Sigmoid colon (tissue), 7 donors: ENCODE measurements at regions of chr5 and their contacts with region 1.

Region 1: GRCh38 chr5:67059744-67060490 is 136.7 kb downstream of the CD180 start:
- DNase-seq: no peak
- H3K4me3 ChIP-seq: no peak overlapping the region
- H3K27ac ChIP-seq: no peak overlapping the region
- H3K4me1 ChIP-seq: peaks cover 0 to 6% (median 0%) of the 10 kb centered on the region in 4 donors
- H3K27me3 ChIP-seq: no peaks in the 10 kb centered on the region
- CTCF ChIP-seq: no peak
- EP300 ChIP-seq: no peak
- POLR2A ChIP-seq: no peak

Region 2: GRCh38 chr5:67073045-67073680 is 13.2 kb after region 1 on chr5:
- intact Hi-C with region 1: loop called (anchors 2 kb)
- DNase-seq: no peak
- H3K4me3 ChIP-seq: no peak overlapping the region
- H3K27ac ChIP-seq: no peak overlapping the region
- H3K4me1 ChIP-seq: no peaks in the 10 kb centered on the region
- H3K27me3 ChIP-seq: no peaks in the 10 kb centered on the region
- CTCF ChIP-seq: no peak
- EP300 ChIP-seq: no peak
- POLR2A ChIP-seq: no peak

Region 3: GRCh38 chr5:67620424-67621397 is 560.8 kb after region 1 on chr5:
- intact Hi-C with region 1: no loop called
- DNase-seq: no peak
- H3K4me3 ChIP-seq: no peak overlapping the region
- H3K27ac ChIP-seq: no peak overlapping the region
- H3K4me1 ChIP-seq: peaks cover 0 to 6% (median 0%) of the 10 kb centered on the region in 4 donors
- H3K27me3 ChIP-seq: no peaks in the 10 kb centered on the region
- CTCF ChIP-seq: no peak
- EP300 ChIP-seq: no peak
- POLR2A ChIP-seq: no peak